ENCODE measurements at regions of chr3 and their contacts with region 1.

Region 1: DNA sequence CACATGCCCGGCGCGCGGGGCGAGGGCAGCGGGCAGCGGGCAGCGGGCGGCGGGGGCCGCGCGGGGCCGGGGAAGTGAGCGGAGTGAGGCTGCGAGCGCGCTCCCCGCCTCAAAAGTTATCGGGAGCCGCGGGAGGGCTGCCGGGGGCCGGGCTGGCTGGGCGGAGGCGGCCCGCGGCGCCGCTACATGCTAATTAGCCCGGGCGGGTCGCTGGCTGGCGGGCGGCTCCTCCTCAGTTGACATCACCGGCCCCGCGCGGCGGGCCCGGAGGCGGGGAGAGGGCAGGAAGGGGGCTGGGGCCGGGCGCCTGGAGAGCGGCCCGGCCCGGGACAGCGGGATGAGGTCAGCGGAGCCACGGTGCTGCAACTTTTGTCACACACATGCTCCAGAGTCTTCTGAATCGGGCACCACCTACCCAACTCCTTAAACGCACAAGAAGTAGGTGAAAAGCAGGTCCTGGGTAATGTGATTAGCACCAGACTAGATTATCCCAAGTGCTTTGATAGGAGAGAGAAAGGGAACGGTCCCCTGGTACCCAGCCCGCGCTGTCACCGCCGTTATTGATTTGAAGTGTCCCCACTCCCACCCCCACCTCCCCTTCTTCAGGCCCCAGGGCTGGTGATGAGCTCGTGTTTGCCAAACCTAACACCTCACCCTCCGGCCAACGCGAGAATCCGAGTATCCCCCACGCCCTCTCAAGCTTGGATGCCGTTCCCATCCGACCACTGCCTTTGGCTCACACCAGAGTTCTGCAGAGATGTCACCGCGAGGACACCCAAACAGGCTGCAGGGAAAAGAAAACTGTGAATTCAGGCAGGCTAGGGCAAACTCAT is at the start of gene HEG1:
- DNase-seq: peak; percentile 54 to 85 (median 72)
- ATAC-seq: peak; percentile 78
- H3K4me3 ChIP-seq: peak within 1 kb of the TSS; percentile 94
- H3K4me3 Mint-ChIP-seq: peak within 1 kb of the TSS; percentile 89 to 100 (median 96)
- H3K27ac ChIP-seq: peak within 1 kb of the TSS; percentile 89
- H3K27ac Mint-ChIP-seq: peak within 1 kb of the TSS; percentile 84 to 99 (median 93)
- H3K4me1 ChIP-seq: peaks cover 34 to 35% of the 10 kb centered on the region in 2 donors
- H3K4me1 Mint-ChIP-seq: peaks cover 33 to 51% (median 46%) of the 10 kb centered on the region in 7 donors
- H3K27me3 ChIP-seq: no peaks in the 10 kb centered on the region
- H3K27me3 Mint-ChIP-seq: peaks cover 0 to 37% (median 6%) of the 10 kb centered on the region in 5 donors
- total RNA-seq, gene HEG1: 16.9 to 45.4 (median 20.0) TPM

Region 2: GRCh38 chr3:124834723-124835718 is 221.1 kb before region 1 on chr3:
- CTCF ChIA-PET with region 1: no interaction called
- POLR2A ChIA-PET with region 1: no interaction called
- intact Hi-C with region 1: loop called in 1 of 2 experiments (anchors 5 kb)
- DNase-seq: peak in 8 of 9 donors; percentile 18 to 58 (median 41)
- ATAC-seq: peak; percentile 86
- H3K4me3 ChIP-seq: peak overlapping the region; percentile 46
- H3K4me3 Mint-ChIP-seq: peak overlapping the region; percentile 82 to 93 (median 86)
- H3K27ac ChIP-seq: no peak overlapping the region
- H3K27ac Mint-ChIP-seq: peak overlapping the region; percentile 39 to 89 (median 77)
- H3K4me1 ChIP-seq: peaks cover 6 to 9% of the 10 kb centered on the region in 2 donors
- H3K4me1 Mint-ChIP-seq: peaks cover 13 to 21% (median 17%) of the 10 kb centered on the region in 7 donors
- H3K27me3 ChIP-seq: no peaks in the 10 kb centered on the region
- H3K27me3 Mint-ChIP-seq: peaks cover 2 to 49% (median 12%) of the 10 kb centered on the region in 5 donors

Region 3: DNA sequence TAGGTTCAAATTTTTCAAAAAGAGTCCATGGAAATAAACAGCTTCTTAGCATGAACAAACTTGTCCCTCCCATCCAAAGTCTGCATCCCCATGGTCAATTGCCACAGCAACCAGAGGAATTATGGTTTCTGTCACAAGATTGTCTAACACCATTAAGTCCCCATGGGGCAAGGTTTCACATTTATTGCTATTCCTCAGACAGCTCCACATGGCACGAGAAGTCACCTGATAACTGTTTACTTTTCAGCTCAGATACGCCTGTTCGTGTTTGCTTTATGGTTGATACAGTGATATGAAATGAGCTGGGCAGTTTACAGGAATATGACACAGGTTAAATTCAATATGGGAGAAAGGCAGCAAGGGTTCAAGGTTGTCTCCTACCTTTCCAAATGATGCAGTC is 83.7 kb before region 1 on chr3:
- CTCF ChIA-PET with region 1: no interaction called
- POLR2A ChIA-PET with region 1: no interaction called
- intact Hi-C with region 1: no loop called
- DNase-seq: no peak
- ATAC-seq: no peak
- H3K4me3 ChIP-seq: no peak overlapping the region
- H3K4me3 Mint-ChIP-seq: no peak overlapping the region
- H3K27ac ChIP-seq: no peak overlapping the region
- H3K27ac Mint-ChIP-seq: no peak overlapping the region
- H3K4me1 ChIP-seq: no peaks in the 10 kb centered on the region
- H3K4me1 Mint-ChIP-seq: peaks cover 0 to 20% (median 0%) of the 10 kb centered on the region in 7 donors
- H3K27me3 ChIP-seq: no peaks in the 10 kb centered on the region
- H3K27me3 Mint-ChIP-seq: no peaks in the 10 kb centered on the region

Region 4: DNA sequence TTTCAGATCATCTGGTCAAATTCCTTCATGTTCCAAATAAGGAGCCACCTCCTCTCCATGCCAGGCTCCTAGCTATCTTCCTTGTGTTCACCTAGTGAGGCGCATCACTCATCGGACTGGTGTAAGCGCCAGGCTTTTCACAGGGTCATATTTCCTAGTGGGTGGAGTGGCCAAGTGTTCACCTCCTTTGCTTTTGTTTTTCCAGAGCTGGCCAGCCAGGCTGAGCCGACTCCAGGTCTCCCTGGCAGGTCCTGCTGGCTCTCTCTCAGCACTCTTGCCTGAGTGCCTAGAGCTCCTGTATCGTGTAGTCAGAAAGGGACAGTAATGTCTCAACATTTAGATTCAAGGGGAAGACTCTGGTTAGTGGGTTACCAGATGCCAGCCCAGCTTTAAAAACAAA is 31.3 kb before region 1 on chr3:
- CTCF ChIA-PET with region 1: no interaction called
- POLR2A ChIA-PET with region 1: interaction called, 4 read pairs
- intact Hi-C with region 1: loop called (anchors 2 kb)
- DNase-seq: no peak
- ATAC-seq: no peak
- H3K4me3 ChIP-seq: no peak overlapping the region
- H3K4me3 Mint-ChIP-seq: peak overlapping the region in 8 of 10 donors; percentile 23 to 68 (median 42)
- H3K27ac ChIP-seq: no peak overlapping the region
- H3K27ac Mint-ChIP-seq: peak overlapping the region; percentile 34 to 92 (median 65)
- H3K4me1 ChIP-seq: peaks cover 22 to 24% of the 10 kb centered on the region in 2 donors
- H3K4me1 Mint-ChIP-seq: peaks cover 45 to 85% (median 68%) of the 10 kb centered on the region in 7 donors
- H3K27me3 ChIP-seq: no peaks in the 10 kb centered on the region
- H3K27me3 Mint-ChIP-seq: no peaks in the 10 kb centered on the region

Region 5: GRCh38 chr3:125087768-125088391 is 31.8 kb after region 1 on chr3:
- CTCF ChIA-PET with region 1: no interaction called
- POLR2A ChIA-PET with region 1: no interaction called
- intact Hi-C with region 1: no loop called
- DNase-seq: no peak
- ATAC-seq: no peak
- H3K4me3 ChIP-seq: no peak overlapping the region
- H3K4me3 Mint-ChIP-seq: no peak overlapping the region
- H3K27ac ChIP-seq: no peak overlapping the region
- H3K27ac Mint-ChIP-seq: no peak overlapping the region
- H3K4me1 ChIP-seq: no peaks in the 10 kb centered on the region
- H3K4me1 Mint-ChIP-seq: no peaks in the 10 kb centered on the region
- H3K27me3 ChIP-seq: no peaks in the 10 kb centered on the region
- H3K27me3 Mint-ChIP-seq: peaks cover 0 to 34% (median 0%) of the 10 kb centered on the region in 5 donors

Region 6: GRCh38 chr3:125129512-125129962 is 73.4 kb after region 1 on chr3:
- CTCF ChIA-PET with region 1: no interaction called
- POLR2A ChIA-PET with region 1: no interaction called
- intact Hi-C with region 1: loop called in 1 of 2 experiments (anchors 5 kb)
- DNase-seq: no peak
- ATAC-seq: no peak
- H3K4me3 ChIP-seq: no peak overlapping the region
- H3K4me3 Mint-ChIP-seq: no peak overlapping the region
- H3K27ac ChIP-seq: no peak overlapping the region
- H3K27ac Mint-ChIP-seq: no peak overlapping the region
- H3K4me1 ChIP-seq: peaks cover 10 to 11% of the 10 kb centered on the region in 2 donors
- H3K4me1 Mint-ChIP-seq: peaks cover 9 to 53% (median 25%) of the 10 kb centered on the region in 7 donors
- H3K27me3 ChIP-seq: no peaks in the 10 kb centered on the region
- H3K27me3 Mint-ChIP-seq: peaks cover 0 to 26% (median 0%) of the 10 kb centered on the region in 5 donors

Region 7: DNA sequence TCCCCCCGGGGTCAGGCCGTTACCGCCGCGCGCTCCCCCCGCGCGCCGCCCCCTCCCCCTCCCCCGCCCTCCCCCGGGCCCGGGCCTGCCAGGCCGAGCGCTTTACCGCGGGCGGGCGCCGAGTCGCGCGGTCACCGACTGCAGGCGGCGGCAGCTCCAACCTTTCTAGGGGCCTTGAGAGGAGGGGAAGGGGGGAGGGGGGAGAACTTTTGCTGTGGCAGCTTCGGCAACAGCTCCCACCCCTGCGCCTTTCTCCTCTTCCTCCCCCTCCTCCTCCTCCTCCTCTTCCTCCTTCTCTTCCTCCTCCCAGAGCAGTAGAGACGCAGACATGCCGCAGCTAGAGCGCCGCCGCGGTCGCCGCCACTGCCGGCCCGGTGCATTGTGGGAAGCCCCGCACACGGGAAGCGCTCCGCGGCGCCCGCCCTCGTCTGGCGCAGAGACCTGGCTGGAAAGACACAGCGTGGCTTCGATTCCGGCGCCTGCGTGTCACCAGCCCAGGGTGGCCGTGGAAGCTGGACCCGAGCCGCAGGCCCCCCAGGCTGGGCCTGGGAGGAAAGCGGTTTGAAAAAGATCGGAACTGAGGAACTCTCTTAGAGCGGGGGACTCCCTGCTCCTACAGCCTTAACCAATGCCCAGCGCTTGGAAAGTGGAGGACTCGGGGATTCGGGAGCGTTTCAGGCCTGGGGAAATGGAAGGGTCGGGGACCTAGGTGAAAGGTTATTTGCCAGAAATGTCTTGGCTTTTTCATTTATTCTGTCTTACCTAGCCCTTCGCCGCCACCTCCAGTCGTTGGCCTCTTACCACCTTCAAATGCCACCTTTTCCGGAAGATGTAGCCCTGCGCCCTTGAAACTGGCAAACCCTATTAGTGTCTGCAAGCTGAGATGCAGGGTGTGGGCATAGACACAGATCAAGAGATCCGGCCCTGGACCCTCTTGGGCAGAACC is 319.1 kb after region 1 on chr3 and contains the start of gene ZNF148:
- CTCF ChIA-PET with region 1: no interaction called
- POLR2A ChIA-PET with region 1: interaction called, 3 read pairs
- intact Hi-C with region 1: loop called (anchors 1 to 2 kb)
- DNase-seq: peak; percentile 86 to 94 (median 92)
- ATAC-seq: peak; percentile 99
- H3K4me3 ChIP-seq: peak within 1 kb of the TSS; percentile 98
- H3K4me3 Mint-ChIP-seq: peak within 1 kb of the TSS; percentile 94 to 100 (median 96)
- H3K27ac ChIP-seq: peak within 1 kb of the TSS; percentile 88
- H3K27ac Mint-ChIP-seq: peak within 1 kb of the TSS; percentile 85 to 99 (median 97)
- H3K4me1 ChIP-seq: peaks cover 10 to 19% of the 10 kb centered on the region in 2 donors
- H3K4me1 Mint-ChIP-seq: peaks cover 27 to 59% (median 48%) of the 10 kb centered on the region in 7 donors
- H3K27me3 ChIP-seq: no peaks in the 10 kb centered on the region
- H3K27me3 Mint-ChIP-seq: peaks cover 0 to 3% (median 0%) of the 10 kb centered on the region in 5 donors
- total RNA-seq, gene ZNF148: 36.3 to 69.6 (median 53.2) TPM

Region 8: GRCh38 chr3:125916376-125916978 is 860.3 kb after region 1 on chr3:
- CTCF ChIA-PET with region 1: no interaction called
- POLR2A ChIA-PET with region 1: no interaction called
- intact Hi-C with region 1: loop called (anchors 5 to 10 kb)
- DNase-seq: peak in 6 of 9 donors; percentile 91 to 96 (median 94)
- ATAC-seq: peak; percentile 98
- H3K4me3 ChIP-seq: peak overlapping the region; percentile 75
- H3K4me3 Mint-ChIP-seq: peak overlapping the region; percentile 82 to 94 (median 91)
- H3K27ac ChIP-seq: peak overlapping the region; percentile 83
- H3K27ac Mint-ChIP-seq: peak overlapping the region; percentile 86 to 99 (median 94)
- H3K4me1 ChIP-seq: no peaks in the 10 kb centered on the region
- H3K4me1 Mint-ChIP-seq: peaks cover 6 to 18% (median 13%) of the 10 kb centered on the region in 7 donors
- H3K27me3 ChIP-seq: no peaks in the 10 kb centered on the region
- H3K27me3 Mint-ChIP-seq: no peaks in the 10 kb centered on the region